ENCODE measurements at regions of chr11 and their contacts with region 1.

Region 1: DNA sequence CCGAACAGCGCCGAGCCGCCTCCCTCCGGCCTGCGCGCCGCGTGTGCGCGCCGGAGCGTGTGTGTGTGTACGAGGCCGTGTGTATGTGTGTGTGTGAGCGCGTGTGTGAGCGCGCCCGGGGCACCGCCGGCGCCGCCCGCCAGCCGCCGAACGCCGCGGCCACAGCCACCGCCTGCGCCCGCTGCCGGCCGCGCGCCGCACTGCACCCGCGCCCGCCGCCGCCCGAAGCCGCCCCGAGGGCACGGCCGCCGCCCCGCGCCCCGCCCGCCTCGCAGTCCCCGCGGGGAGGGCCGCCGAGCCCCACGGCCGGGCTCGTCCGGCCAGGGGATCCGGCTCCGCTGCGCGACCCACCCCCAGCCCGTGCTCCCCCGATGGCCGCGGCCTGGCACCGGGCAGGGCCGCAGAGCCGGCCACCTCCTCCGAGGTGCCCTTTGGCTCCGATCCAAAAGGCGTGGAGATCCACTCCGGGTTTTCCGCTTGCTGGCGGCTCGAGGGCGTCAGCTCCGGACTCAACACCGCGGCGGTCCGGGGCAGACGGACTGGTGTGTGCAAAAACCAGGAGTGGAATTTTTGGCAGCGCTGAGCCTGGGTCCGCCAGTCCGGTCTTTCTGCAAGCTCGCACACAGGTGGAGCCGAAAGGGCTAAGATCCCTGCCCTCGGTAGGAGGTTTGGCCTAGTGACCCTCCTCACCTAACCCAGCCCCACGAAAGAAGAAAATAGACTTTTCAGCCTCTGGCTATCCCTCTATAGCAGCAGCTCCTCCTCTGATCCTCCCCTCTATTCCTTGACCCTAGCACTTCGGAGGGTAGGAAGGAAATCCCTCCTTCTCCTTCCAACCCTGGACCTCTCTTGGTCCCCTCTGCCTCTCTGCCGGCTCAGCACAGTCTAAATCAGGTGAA is at the start of gene SYT7:
- DNase-seq: peak; percentile 96
- H3K4me3 ChIP-seq: peak within 1 kb of the TSS; percentile 47
- H3K27ac ChIP-seq: no peak within 1 kb of the TSS
- H3K27me3 ChIP-seq: peaks cover 64% of the 10 kb centered on the region
- CTCF ChIP-seq: no peak
- polyA plus RNA-seq, gene SYT7: 0.45 and 0.60 TPM in 2 replicates

Region 2: DNA sequence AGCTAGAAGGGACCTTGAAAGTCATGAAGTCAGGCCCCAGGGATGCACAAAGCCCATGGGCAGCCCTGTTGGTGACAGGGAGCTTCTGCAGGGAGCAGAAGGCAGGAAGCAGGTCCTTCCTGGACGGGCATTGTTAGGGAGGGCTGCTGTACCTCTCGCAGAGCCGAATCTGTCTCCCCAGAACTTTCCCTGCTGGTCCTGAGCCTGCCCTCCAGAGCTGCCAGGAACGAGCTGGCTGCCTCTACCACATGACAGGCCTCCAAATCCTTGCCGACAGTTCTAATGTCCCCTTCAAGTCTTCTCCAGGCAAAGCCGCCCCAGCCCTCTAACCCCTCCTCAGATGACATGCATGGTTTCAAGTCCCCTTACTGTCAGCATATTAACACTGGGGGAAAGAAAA is 20.5 kb before region 1 on chr11:
- CTCF ChIA-PET with region 1: no interaction called
- POLR2A ChIA-PET with region 1: no interaction called
- DNase-seq: no peak
- H3K4me3 ChIP-seq: no peak overlapping the region
- H3K27ac ChIP-seq: no peak overlapping the region
- H3K27me3 ChIP-seq: peaks cover 75% of the 10 kb centered on the region
- CTCF ChIP-seq: no peak

Region 3: GRCh38 chr11:62048065-62048464 is 466.8 kb after region 1 on chr11:
- CTCF ChIA-PET with region 1: no interaction called
- POLR2A ChIA-PET with region 1: no interaction called
- DNase-seq: no peak
- H3K4me3 ChIP-seq: no peak overlapping the region
- H3K27ac ChIP-seq: no peak overlapping the region
- H3K27me3 ChIP-seq: peaks cover 14% of the 10 kb centered on the region
- CTCF ChIP-seq: no peak

Region 4: DNA sequence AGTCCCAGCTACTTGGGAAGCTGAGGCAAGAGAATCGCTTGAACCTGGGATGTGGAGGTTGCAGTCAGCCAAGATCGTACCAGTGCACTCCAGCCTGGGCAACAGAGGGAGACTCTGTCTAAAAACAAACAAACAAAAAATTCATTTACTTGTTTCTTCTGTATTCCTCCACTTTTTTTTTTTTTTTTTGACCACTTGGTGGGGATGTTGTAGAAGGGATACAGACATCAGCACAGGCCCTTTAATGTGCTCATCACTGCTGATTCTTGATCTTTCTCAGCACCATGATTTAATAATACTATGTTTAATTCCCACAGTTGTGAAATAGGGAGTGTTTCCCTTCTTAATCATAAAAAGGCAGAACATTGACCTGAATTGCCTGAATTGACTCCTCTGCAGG is 1151.5 kb after region 1 on chr11:
- CTCF ChIA-PET with region 1: no interaction called
- POLR2A ChIA-PET with region 1: interaction called, 11 read pairs
- DNase-seq: no peak
- H3K4me3 ChIP-seq: no peak overlapping the region
- H3K27ac ChIP-seq: no peak overlapping the region
- H3K27me3 ChIP-seq: no peaks in the 10 kb centered on the region
- CTCF ChIP-seq: 0 out of 2 replicates have a peak, but pooled peaks have one; percentile 14

Measured in AG04450 (cell line).